Right cardiac atrium (tissue), 5 donors: ENCODE measurements at regions of chr1 and their contacts with region 1.

Region 1: DNA sequence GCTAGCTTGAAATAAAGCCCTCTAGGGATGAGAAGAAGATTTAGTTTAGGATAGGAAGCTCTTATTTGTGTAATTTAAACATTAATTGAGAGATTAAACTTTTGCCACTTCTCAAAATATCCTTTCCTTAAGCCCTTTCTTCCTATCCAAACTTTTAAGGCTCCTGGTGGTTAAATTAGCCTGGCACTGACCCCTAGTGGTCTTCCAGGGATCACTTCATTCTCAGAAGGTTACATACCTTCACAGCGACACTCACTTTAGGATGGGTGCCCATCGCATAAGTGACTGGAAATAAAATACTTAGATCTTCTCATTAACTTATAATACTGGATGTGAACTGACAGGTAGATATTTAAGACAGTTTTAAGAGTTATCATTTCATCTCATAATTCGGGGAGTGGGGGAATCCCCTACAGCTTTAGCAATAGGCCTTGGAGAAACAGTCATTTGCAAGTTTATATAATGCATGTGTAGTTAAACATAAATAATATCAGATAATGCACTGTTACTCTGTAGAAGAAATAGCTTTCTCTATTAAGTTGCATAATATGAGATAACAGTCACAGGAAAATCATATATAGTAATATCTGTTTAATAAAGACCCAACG is 7.4 kb downstream of the LHX9 start:
- DNase-seq: no peak
- ATAC-seq: peak; percentile 48 to 59
- H3K4me3 ChIP-seq: no peak overlapping the region
- H3K27ac ChIP-seq: no peak overlapping the region
- H3K4me1 ChIP-seq: no peaks in the 10 kb centered on the region
- H3K27me3 ChIP-seq: no peaks in the 10 kb centered on the region

Region 2: DNA sequence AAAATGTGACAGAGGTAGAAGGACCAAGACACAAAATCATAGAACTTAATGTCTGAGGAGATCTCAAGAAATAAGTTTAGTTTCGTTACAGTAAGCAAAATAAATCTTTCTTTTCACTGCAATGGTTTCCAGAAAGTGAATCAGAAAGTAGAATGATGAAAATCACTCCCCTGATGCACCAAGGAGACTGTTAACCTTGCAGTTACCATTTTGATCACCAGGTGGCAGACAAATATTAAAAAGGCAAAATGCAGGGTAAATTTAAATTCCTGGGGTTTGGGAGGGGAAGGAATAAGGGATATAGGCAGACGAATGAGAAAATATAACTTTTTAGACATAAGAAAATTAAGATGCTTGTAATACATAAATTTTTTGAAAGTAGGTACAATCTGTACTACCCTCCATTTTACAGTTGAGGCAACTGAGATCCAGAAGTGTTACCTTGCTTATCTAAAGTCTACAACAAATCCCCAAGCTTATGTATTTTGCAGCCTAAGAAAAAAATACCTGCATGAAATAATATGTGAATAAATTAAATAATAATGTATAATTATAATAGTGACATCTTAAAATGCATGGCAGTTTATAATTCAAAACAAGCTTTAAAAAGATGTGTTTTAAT is 403.4 kb before region 1 on chr1:
- intact Hi-C with region 1: loop called in 1 of 4 experiments (anchors 10 kb)
- DNase-seq: no peak
- ATAC-seq: no peak
- H3K4me3 ChIP-seq: no peak overlapping the region
- H3K27ac ChIP-seq: no peak overlapping the region
- H3K4me1 ChIP-seq: no peaks in the 10 kb centered on the region
- H3K27me3 ChIP-seq: no peaks in the 10 kb centered on the region

Region 3: GRCh38 chr1:197774466-197775281 is 149.9 kb before region 1 on chr1:
- intact Hi-C with region 1: no loop called
- DNase-seq: peak; percentile 63 to 86 (median 84)
- ATAC-seq: peak; percentile 90
- H3K4me3 ChIP-seq: peak overlapping the region; percentile 97
- H3K27ac ChIP-seq: peak overlapping the region; percentile 97
- H3K4me1 ChIP-seq: peaks cover 8% of the 10 kb centered on the region
- H3K27me3 ChIP-seq: no peaks in the 10 kb centered on the region

Region 4: DNA sequence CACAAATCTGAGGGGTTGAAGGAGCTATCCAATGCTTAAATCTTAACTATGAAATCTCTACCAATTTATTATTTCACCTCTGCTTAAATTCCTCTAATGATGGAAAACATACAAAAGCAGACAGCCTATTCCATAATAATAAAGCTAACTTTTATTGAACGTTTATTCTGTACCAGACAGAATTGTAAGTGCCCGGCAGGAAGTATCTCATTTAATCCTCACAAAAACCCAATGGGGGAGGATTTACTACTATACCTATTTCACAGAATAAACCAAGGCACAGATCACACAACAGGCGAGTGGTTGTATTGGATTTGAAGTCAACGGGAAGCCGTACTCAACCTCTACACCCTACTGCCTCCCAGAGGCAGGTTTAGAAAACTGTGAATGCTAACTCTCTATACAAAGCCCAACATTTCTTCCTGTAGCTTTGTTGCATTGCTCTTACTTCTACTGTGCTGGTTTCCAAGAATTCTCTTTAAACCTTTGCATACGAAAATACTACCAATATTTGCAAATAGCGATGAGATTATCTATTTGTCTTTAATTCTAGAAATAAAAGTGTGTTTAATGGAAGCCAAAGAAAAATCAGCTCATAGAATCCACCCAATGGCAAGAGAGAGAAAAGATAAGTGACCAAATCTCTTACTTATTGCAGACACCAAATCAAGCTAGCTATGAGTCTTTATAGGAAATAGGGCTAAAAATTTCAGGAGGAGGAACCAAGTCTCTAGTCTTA is 55.7 kb before region 1 on chr1:
- intact Hi-C with region 1: no loop called
- DNase-seq: no peak
- ATAC-seq: peak; percentile 81 to 89
- H3K4me3 ChIP-seq: no peak overlapping the region
- H3K27ac ChIP-seq: no peak overlapping the region
- H3K4me1 ChIP-seq: no peaks in the 10 kb centered on the region
- H3K27me3 ChIP-seq: no peaks in the 10 kb centered on the region

Region 5: DNA sequence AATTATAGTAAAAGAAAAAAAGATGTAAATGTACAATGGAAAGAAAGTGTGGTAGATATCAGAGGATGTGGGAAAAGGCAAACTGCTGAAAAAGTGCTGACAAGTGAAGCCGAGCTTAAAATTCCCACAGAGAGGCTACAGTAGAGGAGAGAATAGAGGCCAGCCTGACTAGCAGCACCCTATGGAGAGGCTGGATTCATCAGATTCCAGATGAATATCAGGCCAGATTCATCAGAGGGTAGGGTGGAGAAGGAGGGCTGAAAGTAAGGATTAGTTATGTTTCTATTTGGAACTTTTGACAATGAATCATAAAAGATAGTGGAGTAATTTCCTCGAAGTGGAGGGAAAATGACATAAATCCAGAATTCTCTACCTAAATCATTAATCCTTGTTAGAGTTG is 171.8 kb after region 1 on chr1:
- intact Hi-C with region 1: no loop called
- DNase-seq: no peak
- ATAC-seq: no peak
- H3K4me3 ChIP-seq: no peak overlapping the region
- H3K27ac ChIP-seq: no peak overlapping the region
- H3K4me1 ChIP-seq: no peaks in the 10 kb centered on the region
- H3K27me3 ChIP-seq: no peaks in the 10 kb centered on the region